HepG2 (cell line): ENCODE measurements at regions of chr17 and their contacts with region 1.

Region 1: DNA sequence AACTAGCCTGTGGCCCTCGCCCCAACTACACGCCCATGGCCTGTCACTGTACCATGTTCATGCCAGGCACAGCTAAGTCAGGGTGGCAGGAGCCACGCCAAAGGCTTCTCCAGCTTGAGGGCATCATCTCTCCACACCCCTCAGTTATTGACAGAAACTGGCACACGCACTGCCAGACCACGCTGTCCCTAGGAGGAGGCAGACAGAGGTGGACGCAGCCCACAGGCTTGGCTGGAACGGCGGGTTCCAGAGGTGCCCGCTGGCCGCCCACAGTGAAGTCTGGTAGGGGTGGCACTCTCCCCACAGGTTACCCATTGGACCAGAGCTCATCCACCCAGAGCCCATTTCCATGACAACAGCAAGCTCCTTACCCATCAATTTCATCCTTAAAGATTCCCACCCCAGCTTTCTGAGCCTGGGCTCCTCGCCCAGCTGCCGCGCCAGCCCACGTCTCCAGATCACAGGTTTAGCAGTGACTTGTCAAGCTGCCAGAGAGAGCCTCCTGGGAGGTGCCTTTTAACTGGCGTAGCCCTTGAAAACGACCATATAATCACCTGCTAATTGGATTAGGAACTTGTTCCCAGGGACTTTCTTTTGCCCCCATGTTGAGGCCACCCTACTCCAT is 27.9 kb downstream of the RPRML start:
- DNase-seq: no peak
- ATAC-seq: peak; percentile 11
- H3K4me3 ChIP-seq: no peak overlapping the region
- H3K27ac ChIP-seq: no peak overlapping the region
- H3K4me1 ChIP-seq: no peaks in the 10 kb centered on the region
- H3K27me3 ChIP-seq: no peaks in the 10 kb centered on the region
- CTCF ChIP-seq: no peak
- EP300 ChIP-seq: no peak
- POLR2A ChIP-seq: no peak
- RAD21 ChIP-seq: no peak

Region 2: GRCh38 chr17:46901291-46901690 is 49.8 kb before region 1 on chr17:
- CTCF ChIA-PET with region 1: no interaction called
- POLR2A ChIA-PET with region 1: no interaction called
- in situ Hi-C with region 1: no loop called
- intact Hi-C with region 1: no loop called
- DNase-seq: no peak
- ATAC-seq: no peak
- H3K4me3 ChIP-seq: no peak overlapping the region
- H3K27ac ChIP-seq: no peak overlapping the region
- H3K4me1 ChIP-seq: peaks cover 8% of the 10 kb centered on the region
- H3K27me3 ChIP-seq: peaks cover 6 to 27% of the 10 kb centered on the region in 2 experiments; a peak in 4 of 5 replicates
- CTCF ChIP-seq: no peak
- EP300 ChIP-seq: no peak
- POLR2A ChIP-seq: no peak
- RAD21 ChIP-seq: no peak

Region 3: GRCh38 chr17:46964315-46965253 is 13.5 kb after region 1 on chr17:
- CTCF ChIA-PET with region 1: no interaction called
- POLR2A ChIA-PET with region 1: no interaction called
- in situ Hi-C with region 1: no loop called
- intact Hi-C with region 1: loop called (anchors 1 kb)
- DNase-seq: no peak
- ATAC-seq: peak; percentile 46
- H3K4me3 ChIP-seq: no peak overlapping the region
- H3K27ac ChIP-seq: no peak overlapping the region
- H3K4me1 ChIP-seq: no peaks in the 10 kb centered on the region
- H3K27me3 ChIP-seq: no peaks in the 10 kb centered on the region
- CTCF ChIP-seq: no peak
- EP300 ChIP-seq: no peak
- POLR2A ChIP-seq: no peak
- RAD21 ChIP-seq: no peak